Dorsolateral prefrontal cortex (tissue), 120 donors: ENCODE measurements at regions of chr12 and their contacts with region 1.

Region 1: GRCh38 chr12:71840231-71840847 is 780 bp downstream of the TBC1D15 start:
- DNase-seq: peak in 1 of 10 donors; percentile 5
- H3K4me3 ChIP-seq: peak overlapping the region; percentile 55 to 97 (median 82)
- H3K27ac ChIP-seq: peak overlapping the region; percentile 64 to 98 (median 92)
- H3K27me3 ChIP-seq: no peaks in the 10 kb centered on the region
- CTCF ChIP-seq: peak in 1 of 56 donors; percentile 6

Region 2: DNA sequence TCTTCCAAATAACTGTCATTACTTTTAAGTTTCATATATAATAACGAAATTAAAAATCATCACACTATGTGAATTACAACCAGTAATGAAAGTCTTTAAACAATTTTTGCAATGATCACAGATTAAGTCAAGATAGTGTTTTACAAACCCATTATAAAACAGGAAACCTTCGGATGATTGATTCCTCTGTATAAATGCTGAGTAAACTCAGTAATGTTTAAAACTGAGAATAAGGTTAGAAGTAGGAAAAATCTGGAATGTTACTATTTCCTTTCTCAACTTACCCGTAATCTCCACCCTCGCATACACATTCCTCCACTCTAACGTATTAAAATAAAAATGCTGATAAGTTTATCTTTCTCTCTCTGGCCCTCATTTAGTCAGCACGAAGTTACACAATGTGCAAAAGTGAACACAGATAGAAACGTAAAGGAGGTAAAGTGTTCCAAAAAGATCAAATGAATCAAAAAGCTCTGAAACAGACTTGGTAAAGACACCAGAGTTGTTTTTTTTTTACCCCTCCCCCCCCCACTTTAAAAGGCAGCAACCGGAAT is 178.3 kb before region 1 on chr12:
- intact Hi-C with region 1: no loop called
- DNase-seq: no peak
- H3K4me3 ChIP-seq: peak overlapping the region; percentile 59 to 99 (median 92)
- H3K27ac ChIP-seq: no peak overlapping the region
- H3K27me3 ChIP-seq: no peaks in the 10 kb centered on the region
- CTCF ChIP-seq: no peak

Region 3: DNA sequence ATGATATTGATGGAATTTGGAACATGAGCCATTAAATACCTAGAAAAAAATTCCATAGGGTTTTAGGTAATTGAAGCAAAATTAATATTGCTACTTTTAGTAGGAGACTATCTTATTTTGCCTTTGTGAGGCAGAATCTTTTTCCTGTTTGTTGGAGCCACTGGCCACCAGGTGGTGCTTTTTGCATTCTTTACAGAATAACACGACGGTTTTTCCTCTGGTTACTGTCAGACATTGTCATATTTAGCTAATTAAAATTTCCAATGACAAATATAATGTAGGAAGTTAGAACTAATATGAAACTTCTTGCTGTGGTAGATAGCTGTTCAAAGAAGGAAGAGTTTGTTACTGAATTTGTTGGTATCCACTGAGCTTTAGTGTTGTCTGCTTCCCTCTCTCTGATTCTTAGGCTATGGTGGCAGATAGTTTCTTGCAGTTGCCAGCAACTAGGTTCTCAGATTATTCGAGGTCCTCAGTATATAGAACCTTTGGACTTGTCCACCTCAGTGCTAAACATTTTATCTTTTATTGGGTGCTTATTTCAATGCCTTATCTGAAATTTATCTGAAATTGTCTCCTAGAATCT is 60.0 kb before region 1 on chr12:
- intact Hi-C with region 1: loop called in 1 of 2 experiments (anchors 2 kb)
- DNase-seq: peak in 7 of 10 donors; percentile 42 to 70 (median 48)
- H3K4me3 ChIP-seq: no peak overlapping the region
- H3K27ac ChIP-seq: peak overlapping the region in 6 of 59 donors; percentile 8 to 43 (median 28)
- H3K27me3 ChIP-seq: no peaks in the 10 kb centered on the region
- CTCF ChIP-seq: peak; percentile 59 to 92 (median 78)

Region 4: GRCh38 chr12:71790331-71790730 is 50.0 kb before region 1 on chr12:
- intact Hi-C with region 1: loop called in 1 of 2 experiments (anchors 5 kb)
- DNase-seq: no peak
- H3K4me3 ChIP-seq: no peak overlapping the region
- H3K27ac ChIP-seq: no peak overlapping the region
- H3K27me3 ChIP-seq: no peaks in the 10 kb centered on the region
- CTCF ChIP-seq: no peak